Dorsolateral prefrontal cortex (tissue), 120 donors: ENCODE measurements at regions of chr4 and their contacts with region 1.

Region 1: GRCh38 chr4:157978680-157979361 is 194.0 kb downstream of the GASK1B start:
- DNase-seq: peak; percentile 33 to 77 (median 60)
- H3K4me3 ChIP-seq: peak overlapping the region in 55 of 59 donors; percentile 3 to 60 (median 41)
- H3K27ac ChIP-seq: peak overlapping the region in 30 of 59 donors; percentile 3 to 84 (median 42)
- H3K27me3 ChIP-seq: no peaks in the 10 kb centered on the region
- CTCF ChIP-seq: peak; percentile 60 to 95 (median 86)

Region 2: GRCh38 chr4:156763511-156763910 is 1215.3 kb before region 1 on chr4:
- intact Hi-C with region 1: loop called in 1 of 2 experiments (anchors 10 kb)
- DNase-seq: no peak
- H3K4me3 ChIP-seq: no peak overlapping the region
- H3K27ac ChIP-seq: no peak overlapping the region
- H3K27me3 ChIP-seq: no peaks in the 10 kb centered on the region
- CTCF ChIP-seq: no peak

Region 3: GRCh38 chr4:157421365-157421764 is 557.5 kb before region 1 on chr4:
- intact Hi-C with region 1: no loop called
- DNase-seq: no peak
- H3K4me3 ChIP-seq: no peak overlapping the region
- H3K27ac ChIP-seq: no peak overlapping the region
- H3K27me3 ChIP-seq: no peaks in the 10 kb centered on the region
- CTCF ChIP-seq: no peak

Region 4: DNA sequence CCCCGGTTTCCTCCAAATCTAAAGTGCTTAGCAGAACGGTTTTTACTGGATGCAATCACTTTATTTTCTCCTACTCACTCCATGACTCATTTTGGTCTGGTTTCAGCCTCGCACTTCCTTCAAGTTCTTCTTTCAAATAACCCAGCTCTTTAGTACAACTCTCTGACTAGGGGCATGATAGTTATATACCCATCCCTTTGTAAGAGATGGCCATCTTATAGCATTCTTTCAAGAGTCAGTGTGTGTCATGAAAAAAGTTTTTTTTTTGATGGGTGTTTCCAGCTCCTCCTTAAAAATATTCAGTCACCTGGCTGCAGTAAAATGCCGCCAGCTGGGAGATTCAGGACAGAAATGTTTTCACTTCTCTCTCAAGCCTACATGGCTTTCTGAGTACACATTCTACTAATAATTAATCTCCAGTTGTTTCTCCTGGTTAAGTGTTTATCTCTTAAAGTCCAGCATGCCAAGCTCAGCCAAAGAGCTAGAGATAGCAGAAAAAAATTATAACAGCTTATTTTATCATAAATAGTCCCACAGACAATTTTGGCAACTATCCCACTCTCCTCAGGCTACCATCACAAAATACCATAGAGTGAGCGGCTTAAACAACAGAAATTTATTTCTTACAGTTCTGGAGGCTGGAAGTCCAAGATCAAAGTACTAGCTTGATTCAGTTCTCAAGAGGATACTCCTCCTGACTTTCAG is 54.7 kb after region 1 on chr4:
- intact Hi-C with region 1: no loop called
- DNase-seq: no peak
- H3K4me3 ChIP-seq: no peak overlapping the region
- H3K27ac ChIP-seq: no peak overlapping the region
- H3K27me3 ChIP-seq: no peaks in the 10 kb centered on the region
- CTCF ChIP-seq: no peak